ENCODE measurements at regions of chr3 and their contacts with region 1.

Region 1: DNA sequence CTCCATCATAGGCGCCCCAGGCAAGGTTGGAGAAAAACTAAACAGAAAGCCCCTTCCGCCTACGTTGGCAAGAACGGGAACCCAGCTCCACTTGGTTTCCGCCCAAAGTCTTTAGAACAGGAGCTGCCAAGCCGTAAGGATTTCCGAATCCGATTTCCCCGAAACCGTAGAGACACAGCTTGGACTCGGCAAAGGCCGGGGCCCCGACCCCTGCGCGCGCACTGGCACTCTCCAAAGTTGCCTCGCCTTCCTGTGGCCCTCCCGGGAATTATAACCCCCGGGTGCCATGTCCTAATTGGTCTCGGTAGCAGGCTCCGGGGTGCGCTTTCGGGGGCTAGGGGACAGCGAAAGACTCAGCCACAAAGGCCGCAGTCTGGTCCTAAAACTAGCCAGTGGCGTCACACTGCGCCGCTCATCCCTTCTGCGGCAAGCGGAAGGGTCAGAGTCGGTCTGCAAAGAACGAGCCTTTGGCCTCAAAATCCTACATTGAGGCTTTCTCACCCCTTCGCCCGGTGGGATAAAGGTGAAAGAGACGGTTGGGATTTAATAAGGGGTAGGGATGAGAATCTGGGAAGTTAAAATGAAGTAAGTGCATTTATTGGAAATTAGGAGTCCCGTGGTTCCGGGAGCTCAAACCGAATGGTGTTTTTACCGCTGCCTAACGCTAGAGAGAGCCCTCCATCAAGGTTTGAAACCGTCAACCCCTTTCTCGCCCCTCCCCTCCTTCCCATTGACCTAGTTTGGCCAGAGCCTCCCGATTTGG is 6.8 kb downstream of the BCL6 start:
- DNase-seq: peak; percentile 85
- H3K4me3 Mint-ChIP-seq: peak overlapping the region; percentile 86
- H3K27ac Mint-ChIP-seq: peak overlapping the region; percentile 97
- H3K4me1 Mint-ChIP-seq: peaks cover 35% of the 10 kb centered on the region
- H3K27me3 Mint-ChIP-seq: no peaks in the 10 kb centered on the region

Region 2: GRCh38 chr3:187770224-187770623 is 31.7 kb after region 1 on chr3:
- CTCF ChIA-PET with region 1: interaction called, 11 read pairs
- intact Hi-C with region 1: no loop called
- DNase-seq: peak; percentile 73
- H3K4me3 Mint-ChIP-seq: no peak overlapping the region
- H3K27ac Mint-ChIP-seq: peak overlapping the region; percentile 82
- H3K4me1 Mint-ChIP-seq: peaks cover 38% of the 10 kb centered on the region
- H3K27me3 Mint-ChIP-seq: no peaks in the 10 kb centered on the region

Region 3: DNA sequence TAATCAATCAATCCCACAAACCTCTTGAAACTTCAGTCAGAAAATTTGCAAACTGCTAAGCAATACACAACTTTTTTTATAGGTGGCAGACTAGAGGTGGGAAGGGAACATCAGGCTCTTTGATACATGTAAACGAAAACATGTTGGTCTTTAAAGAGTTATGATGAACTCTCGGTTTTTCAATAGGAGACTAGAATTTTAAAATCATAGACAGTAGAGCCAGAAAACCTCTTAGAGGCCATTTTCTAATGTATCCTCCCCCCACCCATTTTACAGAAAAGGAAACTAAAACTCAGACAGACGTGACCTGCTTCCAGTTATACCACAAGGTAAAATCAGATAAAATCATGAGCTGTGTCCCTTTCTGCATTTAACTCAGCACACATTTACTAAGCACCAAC is 236.4 kb after region 1 on chr3:
- CTCF ChIA-PET with region 1: interaction called, 25 read pairs
- intact Hi-C with region 1: loop called (anchors 1 kb)
- DNase-seq: no peak
- H3K4me3 Mint-ChIP-seq: peak overlapping the region; percentile 50
- H3K27ac Mint-ChIP-seq: peak overlapping the region; percentile 82
- H3K4me1 Mint-ChIP-seq: peaks cover 50% of the 10 kb centered on the region
- H3K27me3 Mint-ChIP-seq: no peaks in the 10 kb centered on the region

Region 4: GRCh38 chr3:188286087-188286513 is 547.6 kb after region 1 on chr3:
- CTCF ChIA-PET with region 1: interaction called, 22 read pairs
- intact Hi-C with region 1: loop called (anchors 1 kb)
- DNase-seq: peak; percentile 32
- H3K4me3 Mint-ChIP-seq: no peak overlapping the region
- H3K27ac Mint-ChIP-seq: no peak overlapping the region
- H3K4me1 Mint-ChIP-seq: peaks cover 45% of the 10 kb centered on the region
- H3K27me3 Mint-ChIP-seq: no peaks in the 10 kb centered on the region

Region 5: DNA sequence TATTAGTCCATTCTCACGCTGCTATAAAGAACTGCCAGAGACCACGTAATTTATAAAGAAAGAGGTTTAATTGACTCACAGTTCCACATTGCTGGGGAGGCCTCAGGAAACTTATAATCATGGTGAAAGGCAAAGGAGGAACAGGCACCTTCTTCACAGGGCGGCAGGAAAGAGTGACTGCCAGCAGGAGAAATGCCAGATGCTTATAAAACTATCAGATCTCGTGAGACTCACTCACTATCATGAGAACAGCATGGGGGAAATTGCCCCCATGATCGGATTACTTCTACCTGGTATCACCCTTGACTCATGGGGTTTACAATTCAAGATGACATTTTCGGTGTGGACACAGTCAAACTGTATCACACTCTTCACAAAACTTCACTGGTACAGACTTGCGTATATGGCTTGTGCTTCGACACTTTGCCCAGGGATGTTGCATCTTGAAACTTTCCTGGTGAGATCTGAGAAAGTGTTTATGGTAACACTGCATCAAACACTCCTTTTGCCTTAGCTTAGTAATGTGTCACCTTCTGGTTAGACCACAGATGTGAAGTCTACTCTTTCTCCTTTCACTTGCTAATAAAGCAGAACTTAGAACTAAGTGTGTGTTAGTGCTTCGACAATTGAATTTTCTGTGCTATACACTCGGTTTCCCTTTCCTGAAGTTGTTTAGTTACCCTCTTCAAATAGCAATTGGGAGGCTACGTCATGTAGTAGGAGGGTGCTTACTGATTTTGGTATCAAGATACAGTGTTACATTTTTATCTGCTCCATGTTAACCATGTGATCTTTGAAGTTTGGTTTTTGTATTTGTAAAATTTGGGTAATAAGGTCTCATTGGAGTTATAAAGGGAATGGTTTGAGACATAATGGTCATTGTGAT is 601.1 kb after region 1 on chr3:
- CTCF ChIA-PET with region 1: interaction called, 6 read pairs
- intact Hi-C with region 1: loop called (anchors 1 kb)
- DNase-seq: peak; percentile 76
- H3K4me3 Mint-ChIP-seq: peak overlapping the region; percentile 59
- H3K27ac Mint-ChIP-seq: peak overlapping the region; percentile 92
- H3K4me1 Mint-ChIP-seq: peaks cover 34% of the 10 kb centered on the region
- H3K27me3 Mint-ChIP-seq: no peaks in the 10 kb centered on the region

Region 6: GRCh38 chr3:188664795-188665194 is 926.3 kb after region 1 on chr3:
- CTCF ChIA-PET with region 1: interaction called, 4 read pairs
- intact Hi-C with region 1: loop called (anchors 1 kb)
- DNase-seq: peak; percentile 40
- H3K4me3 Mint-ChIP-seq: no peak overlapping the region
- H3K27ac Mint-ChIP-seq: no peak overlapping the region
- H3K4me1 Mint-ChIP-seq: peaks cover 5% of the 10 kb centered on the region
- H3K27me3 Mint-ChIP-seq: no peaks in the 10 kb centered on the region

Region 7: GRCh38 chr3:189041482-189042090 is 1303.1 kb after region 1 on chr3:
- CTCF ChIA-PET with region 1: interaction called, 15 read pairs
- intact Hi-C with region 1: loop called (anchors 1 kb)
- DNase-seq: peak; percentile 90
- H3K4me3 Mint-ChIP-seq: no peak overlapping the region
- H3K27ac Mint-ChIP-seq: no peak overlapping the region
- H3K4me1 Mint-ChIP-seq: peaks cover 29% of the 10 kb centered on the region
- H3K27me3 Mint-ChIP-seq: peaks cover 3% of the 10 kb centered on the region